ENCODE measurements at regions of chr14 and their contacts with region 1.

Region 1: DNA sequence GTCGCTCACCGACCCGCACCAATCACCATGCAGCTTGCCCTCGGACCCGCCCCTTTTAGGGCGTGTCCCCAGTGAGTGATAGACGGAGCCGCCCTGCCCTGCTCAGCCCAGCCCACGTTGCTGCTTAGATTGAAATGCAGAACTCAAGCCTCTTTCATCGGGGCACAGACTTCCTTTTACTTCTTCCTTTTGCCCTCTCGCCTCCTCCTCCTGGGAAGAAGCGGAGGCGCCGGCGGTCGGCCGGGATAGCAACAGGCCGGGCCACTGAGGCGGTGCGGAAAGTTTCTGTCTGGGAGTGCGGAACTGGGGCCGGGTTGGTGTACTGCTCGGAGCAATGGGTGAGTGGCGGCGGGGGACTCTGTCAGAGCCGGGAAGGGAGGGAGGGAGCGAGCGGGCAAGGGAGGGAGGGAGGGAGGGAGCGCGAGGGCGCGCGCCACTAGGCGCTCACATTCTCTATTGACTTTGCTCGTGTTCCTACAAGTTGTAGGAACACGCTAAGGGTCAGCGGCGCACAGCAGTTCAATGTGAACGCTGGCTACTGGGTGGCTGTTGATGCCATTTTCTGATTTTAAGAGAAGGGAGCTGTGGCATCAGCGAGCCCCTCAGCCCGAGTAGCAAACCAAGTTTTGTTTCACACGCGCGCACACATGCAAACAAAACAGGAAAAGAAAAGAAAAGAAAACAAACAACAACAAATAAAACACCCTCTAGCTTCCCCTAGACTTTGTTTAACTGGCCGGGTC is at the start of gene PAX9:
- DNase-seq: peak; percentile 65
- H3K4me3 Mint-ChIP-seq: peak within 1 kb of the TSS; percentile 48
- H3K27ac Mint-ChIP-seq: peak within 1 kb of the TSS; percentile 41
- H3K4me1 Mint-ChIP-seq: peaks cover 43% of the 10 kb centered on the region
- H3K27me3 Mint-ChIP-seq: peaks cover 90% of the 10 kb centered on the region
- total RNA-seq, gene PAX9: not detected

Region 2: GRCh38 chr14:36439766-36440165 is 222.2 kb before region 1 on chr14:
- CTCF ChIA-PET with region 1: no interaction called
- intact Hi-C with region 1: no loop called
- DNase-seq: no peak
- H3K4me3 Mint-ChIP-seq: no peak overlapping the region
- H3K27ac Mint-ChIP-seq: no peak overlapping the region
- H3K4me1 Mint-ChIP-seq: no peaks in the 10 kb centered on the region
- H3K27me3 Mint-ChIP-seq: peaks cover 26% of the 10 kb centered on the region

Region 3: GRCh38 chr14:36747411-36748184 is 85.7 kb after region 1 on chr14:
- CTCF ChIA-PET with region 1: no interaction called
- intact Hi-C with region 1: loop called (anchors 5 kb)
- DNase-seq: no peak
- H3K4me3 Mint-ChIP-seq: no peak overlapping the region
- H3K27ac Mint-ChIP-seq: no peak overlapping the region
- H3K4me1 Mint-ChIP-seq: no peaks in the 10 kb centered on the region
- H3K27me3 Mint-ChIP-seq: peaks cover 8% of the 10 kb centered on the region

Region 4: DNA sequence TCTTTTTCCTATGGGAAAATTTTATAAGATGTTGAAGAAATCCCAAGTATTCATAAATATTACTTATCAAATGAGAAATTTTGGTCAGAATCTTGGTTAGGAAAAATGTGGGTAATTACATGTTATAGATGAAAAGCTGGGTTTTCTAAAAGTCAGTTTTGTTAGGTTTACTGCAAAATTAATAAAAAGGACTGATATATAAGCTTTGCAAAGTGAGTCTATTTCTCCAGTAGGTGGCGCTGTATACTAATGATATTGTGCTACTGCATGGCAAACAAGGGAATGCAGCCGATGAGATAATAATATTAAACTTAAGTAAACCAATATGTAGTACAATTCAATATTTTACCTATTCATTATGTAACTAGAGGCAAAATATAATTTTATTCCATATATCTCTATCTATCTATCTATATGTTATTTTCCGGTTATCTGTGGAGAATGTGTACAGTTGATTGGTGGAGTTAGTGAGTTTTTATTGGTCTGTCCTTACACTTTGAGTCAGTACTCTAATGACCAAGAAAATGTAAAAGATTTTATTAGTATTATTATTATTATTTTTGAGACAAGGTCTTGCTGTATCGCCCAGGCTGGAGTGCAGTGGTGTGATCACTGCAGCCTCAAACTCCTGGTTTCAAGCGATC is 568.7 kb after region 1 on chr14:
- CTCF ChIA-PET with region 1: no interaction called
- intact Hi-C with region 1: loop called (anchors 10 kb)
- DNase-seq: no peak
- H3K4me3 Mint-ChIP-seq: no peak overlapping the region
- H3K27ac Mint-ChIP-seq: no peak overlapping the region
- H3K4me1 Mint-ChIP-seq: no peaks in the 10 kb centered on the region
- H3K27me3 Mint-ChIP-seq: no peaks in the 10 kb centered on the region

Measured in activated naive CD4-positive, alpha-beta T cell treated with anti-CD3 and anti-CD28 coated beads for 36 hours (primary cell).